ENCODE measurements at regions of chr16 and their contacts with region 1.

Region 1: DNA sequence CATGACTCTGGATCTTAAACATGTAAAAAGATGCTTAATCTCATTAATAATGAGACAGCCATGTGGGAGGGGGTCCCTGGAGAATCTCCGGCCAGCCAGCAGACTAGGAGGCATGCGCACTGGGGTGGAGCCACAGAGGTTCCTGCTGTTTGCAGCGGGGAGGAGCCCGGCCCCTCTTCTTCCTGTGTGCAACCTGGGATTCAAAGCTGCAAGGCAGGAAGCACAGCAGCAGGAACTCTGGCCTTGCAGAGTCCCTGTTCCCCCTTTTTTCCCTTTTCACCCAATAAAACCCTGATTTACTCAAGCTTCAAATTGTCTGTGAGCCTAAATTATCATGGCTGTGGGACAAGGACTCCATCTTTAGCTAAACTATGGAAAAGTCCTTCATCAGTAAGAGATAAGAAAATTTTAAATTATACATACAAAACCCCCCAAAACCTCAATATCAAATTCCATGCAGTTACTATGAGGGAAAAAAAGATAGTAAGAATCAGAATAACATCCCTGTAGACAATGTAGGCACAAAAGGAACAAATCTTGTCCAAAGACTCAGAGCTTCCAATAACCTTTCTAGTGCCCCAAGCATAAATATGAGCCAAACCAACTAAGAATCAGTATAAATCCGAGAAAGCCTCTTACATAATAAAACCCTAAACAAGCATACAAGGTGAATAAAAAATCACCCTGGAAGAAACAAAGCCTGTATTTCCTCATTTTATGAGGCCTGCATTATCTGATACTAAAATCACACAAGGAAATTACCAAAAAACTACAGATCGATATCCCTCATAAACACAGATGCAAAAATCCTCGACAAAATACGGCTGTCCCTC is 12.1 kb downstream of the CFDP1 start:
- DNase-seq: peak; percentile 97
- H3K4me3 ChIP-seq: peak overlapping the region; percentile 3
- H3K27ac ChIP-seq: peak overlapping the region; percentile 81
- H3K4me1 ChIP-seq: peaks cover 35% of the 10 kb centered on the region
- H3K27me3 ChIP-seq: no peaks in the 10 kb centered on the region
- CTCF ChIP-seq: no peak

Region 2: DNA sequence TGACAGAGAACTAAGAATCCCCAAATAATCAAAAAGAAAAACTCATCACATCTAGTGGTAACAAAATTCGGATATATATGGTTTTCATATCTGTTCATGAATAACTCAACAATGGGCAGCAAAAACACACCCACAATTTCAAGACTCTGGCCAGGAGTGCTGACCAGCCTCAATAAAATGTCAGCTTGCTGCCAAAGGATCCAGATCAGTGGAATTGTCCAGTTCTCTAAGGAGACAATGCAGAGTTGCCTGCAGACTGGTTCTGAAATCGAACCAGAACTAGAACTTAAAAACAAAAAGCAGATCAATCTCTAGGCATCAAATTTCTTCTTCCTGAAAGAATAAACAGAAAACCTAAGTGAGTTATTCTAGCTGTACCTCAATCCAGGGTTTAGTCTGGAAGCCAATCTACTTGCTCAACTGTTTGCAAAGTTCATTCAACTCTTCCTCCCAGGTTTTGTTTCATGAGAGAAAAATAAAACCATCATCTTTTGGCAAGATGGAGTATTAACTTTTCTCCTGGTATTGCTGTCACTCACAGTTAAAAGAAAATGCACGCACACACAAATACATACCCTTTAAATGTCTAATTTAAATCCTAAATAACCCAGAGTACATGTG is 48.9 kb before region 1 on chr16:
- CTCF ChIA-PET with region 1: no interaction called
- POLR2A ChIA-PET with region 1: no interaction called
- intact Hi-C with region 1: no loop called
- DNase-seq: no peak
- H3K4me3 ChIP-seq: no peak overlapping the region
- H3K27ac ChIP-seq: no peak overlapping the region
- H3K4me1 ChIP-seq: peaks cover 7% of the 10 kb centered on the region
- H3K27me3 ChIP-seq: no peaks in the 10 kb centered on the region
- CTCF ChIP-seq: no peak

Region 3: DNA sequence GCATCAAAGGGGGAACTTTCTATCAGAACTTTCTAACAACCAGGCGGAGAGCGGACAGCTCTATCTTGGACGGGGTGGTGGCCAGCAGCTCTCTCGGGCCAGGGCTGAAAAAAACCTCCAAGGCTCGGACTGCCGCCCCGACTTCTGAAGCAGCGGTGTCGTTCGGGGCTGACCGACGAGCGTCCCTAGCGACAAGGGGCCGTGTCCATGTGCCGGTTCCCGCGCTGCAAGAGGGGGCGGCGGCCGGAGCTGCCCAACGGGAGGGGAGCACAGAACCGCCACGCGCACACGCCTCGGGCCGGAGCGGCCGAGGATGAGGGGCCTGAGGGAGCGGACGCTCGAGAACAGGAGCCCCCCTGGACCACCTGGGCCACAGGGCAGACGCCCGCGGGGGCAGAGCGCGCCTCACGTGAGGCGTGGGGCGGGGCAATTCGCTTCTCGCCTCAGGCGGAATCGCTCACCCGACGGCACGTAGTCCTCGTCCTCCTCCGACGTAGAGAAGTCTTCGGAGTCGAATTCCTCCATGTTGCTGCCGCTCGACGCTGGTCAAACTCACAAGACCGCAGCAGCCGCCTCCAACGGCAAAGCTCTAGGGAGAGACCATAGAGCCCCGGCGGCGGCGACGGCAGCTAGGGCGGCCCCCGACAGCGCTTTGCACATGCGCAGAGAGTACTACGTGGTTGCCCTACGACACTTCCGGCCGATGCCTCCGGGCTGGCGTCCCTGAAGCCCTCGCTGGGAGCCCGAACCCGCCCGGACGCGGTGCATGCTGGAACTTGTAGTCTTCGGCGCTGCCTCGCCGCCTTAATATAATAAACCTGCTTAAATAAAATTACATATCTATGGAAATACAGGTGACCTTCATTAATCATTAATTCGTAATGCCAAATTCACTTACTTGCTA is 11.9 kb after region 1 on chr16 and contains the start of gene CFDP1:
- CTCF ChIA-PET with region 1: no interaction called
- POLR2A ChIA-PET with region 1: interaction called, 11 read pairs
- intact Hi-C with region 1: no loop called
- DNase-seq: peak; percentile 97
- H3K4me3 ChIP-seq: peak within 1 kb of the TSS; percentile 88
- H3K27ac ChIP-seq: peak within 1 kb of the TSS; percentile 93
- H3K4me1 ChIP-seq: peaks cover 6% of the 10 kb centered on the region
- H3K27me3 ChIP-seq: no peaks in the 10 kb centered on the region
- CTCF ChIP-seq: no peak
- total RNA-seq, gene CFDP1: 89.5 and 97.6 TPM in 2 replicates

Region 4: DNA sequence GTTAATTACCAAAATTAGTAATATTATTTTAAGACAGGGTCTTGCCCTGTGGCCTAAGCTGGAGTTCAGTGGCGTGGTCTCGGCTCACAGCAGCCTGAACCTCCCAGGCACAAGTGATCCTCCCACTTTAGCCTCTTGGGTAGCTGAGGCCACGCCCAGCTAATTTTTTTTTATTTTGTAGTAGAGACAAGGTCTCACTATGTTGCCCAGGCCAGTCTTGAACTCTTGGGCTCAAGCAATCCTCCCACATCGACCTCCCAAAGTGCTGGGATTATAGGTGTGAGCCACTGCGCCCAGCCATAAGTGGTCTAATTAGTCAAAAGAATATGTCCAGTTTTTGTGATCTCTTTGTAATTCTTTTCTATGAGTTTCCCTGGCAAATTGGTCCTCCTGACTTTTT is 24.1 kb after region 1 on chr16:
- CTCF ChIA-PET with region 1: no interaction called
- POLR2A ChIA-PET with region 1: no interaction called
- intact Hi-C with region 1: no loop called
- DNase-seq: no peak
- H3K4me3 ChIP-seq: no peak overlapping the region
- H3K27ac ChIP-seq: no peak overlapping the region
- H3K4me1 ChIP-seq: peaks cover 11% of the 10 kb centered on the region
- H3K27me3 ChIP-seq: no peaks in the 10 kb centered on the region
- CTCF ChIP-seq: no peak

Region 5: DNA sequence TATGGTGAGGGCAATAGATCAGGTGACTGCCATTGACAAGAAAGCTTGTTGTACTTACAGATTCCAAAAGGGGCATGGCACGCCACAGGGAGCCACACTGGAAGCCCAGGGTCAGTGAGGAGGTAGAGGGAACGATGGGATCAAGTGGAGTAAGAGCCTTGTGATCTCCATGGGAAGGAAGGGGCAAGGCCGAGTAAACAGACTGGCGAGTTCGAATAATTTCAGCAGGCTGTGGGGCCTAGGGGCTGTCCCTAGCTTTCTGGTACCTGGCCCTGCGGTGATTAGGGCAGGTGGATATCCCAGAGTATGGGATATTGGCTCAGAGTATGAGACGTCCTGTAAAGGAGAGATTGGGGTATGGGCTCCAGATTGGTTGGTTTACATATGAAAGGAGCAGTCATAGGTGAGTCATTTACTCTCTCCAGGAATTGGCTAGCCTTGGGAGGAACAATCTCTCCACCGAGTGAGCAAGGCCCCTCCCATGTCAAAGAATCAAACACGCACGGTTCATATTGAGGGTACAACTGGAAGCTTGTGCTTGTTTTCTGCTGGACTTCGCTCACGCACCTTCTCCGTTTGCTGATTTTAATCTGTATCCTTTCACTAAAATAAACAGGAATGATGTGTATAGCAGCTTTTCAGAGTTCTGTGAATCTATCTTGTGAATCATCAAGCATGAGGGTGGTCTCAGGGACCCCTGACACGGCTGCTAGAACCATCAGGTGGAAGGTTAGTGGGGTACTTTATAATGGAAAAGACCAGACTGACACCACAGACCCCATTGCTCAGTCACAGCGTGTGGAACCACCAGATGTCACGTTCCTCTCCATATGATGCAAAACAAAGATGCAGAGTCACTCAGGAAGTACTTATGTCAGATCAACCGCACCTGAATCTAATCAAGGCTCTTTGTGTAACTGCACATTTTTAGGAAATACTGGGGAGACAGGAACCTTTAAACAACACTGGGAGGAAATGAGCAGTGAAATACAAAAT is 172.9 kb after region 1 on chr16:
- CTCF ChIA-PET with region 1: no interaction called
- POLR2A ChIA-PET with region 1: interaction called, 10 read pairs
- intact Hi-C with region 1: no loop called
- DNase-seq: peak; percentile 79
- H3K4me3 ChIP-seq: no peak overlapping the region
- H3K27ac ChIP-seq: peak overlapping the region; percentile 78
- H3K4me1 ChIP-seq: peaks cover 30% of the 10 kb centered on the region
- H3K27me3 ChIP-seq: no peaks in the 10 kb centered on the region
- CTCF ChIP-seq: no peak

Region 6: GRCh38 chr16:77077256-77077922 is 1656.2 kb after region 1 on chr16:
- CTCF ChIA-PET with region 1: no interaction called
- POLR2A ChIA-PET with region 1: no interaction called
- intact Hi-C with region 1: no loop called
- DNase-seq: no peak
- H3K4me3 ChIP-seq: no peak overlapping the region
- H3K27ac ChIP-seq: no peak overlapping the region
- H3K4me1 ChIP-seq: no peaks in the 10 kb centered on the region
- H3K27me3 ChIP-seq: peaks cover 9% of the 10 kb centered on the region
- CTCF ChIP-seq: no peak

Measured in A673 (cell line).